Posterior vena cava (tissue), 2 donors: ENCODE measurements at regions of chr20 and their contacts with region 1.

Region 1: GRCh38 chr20:58980700-58981627 is at the start of gene NELFCD:
- DNase-seq: peak; percentile 95
- total RNA-seq, gene NELFCD: 25.9 to 28.2 TPM

Region 2: DNA sequence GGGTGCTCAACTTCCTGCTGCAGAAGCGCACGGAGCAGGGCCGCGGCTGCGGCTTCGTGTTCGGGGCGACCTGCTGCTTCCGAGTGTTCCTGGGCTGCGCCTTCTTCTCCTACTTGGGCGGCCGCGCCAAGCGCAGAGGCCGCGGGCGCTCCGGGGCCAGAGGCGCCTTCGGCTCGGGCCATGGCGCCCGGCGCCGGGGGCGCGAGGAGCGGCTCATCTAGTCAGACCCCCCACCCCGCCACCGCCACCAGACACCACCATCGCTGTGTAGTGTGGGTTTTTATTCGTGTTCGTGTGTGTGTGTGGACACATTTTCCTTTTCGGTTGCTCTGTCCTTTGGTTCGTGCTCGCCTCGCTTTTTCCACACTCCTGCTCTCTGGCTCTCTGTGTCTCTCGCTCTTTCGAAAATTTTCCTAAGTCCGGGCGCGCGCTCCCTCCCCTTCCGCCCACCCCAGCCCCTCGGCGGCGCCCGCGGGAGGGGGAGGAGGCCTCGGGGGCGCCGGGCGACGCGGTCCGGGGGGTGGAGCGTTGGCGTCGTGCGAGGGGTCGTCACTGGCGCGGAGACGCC is 90.4 kb before region 1 on chr20:
- intact Hi-C with region 1: loop called in 1 of 2 experiments (anchors 10 kb)
- DNase-seq: peak; percentile 92

Region 3: DNA sequence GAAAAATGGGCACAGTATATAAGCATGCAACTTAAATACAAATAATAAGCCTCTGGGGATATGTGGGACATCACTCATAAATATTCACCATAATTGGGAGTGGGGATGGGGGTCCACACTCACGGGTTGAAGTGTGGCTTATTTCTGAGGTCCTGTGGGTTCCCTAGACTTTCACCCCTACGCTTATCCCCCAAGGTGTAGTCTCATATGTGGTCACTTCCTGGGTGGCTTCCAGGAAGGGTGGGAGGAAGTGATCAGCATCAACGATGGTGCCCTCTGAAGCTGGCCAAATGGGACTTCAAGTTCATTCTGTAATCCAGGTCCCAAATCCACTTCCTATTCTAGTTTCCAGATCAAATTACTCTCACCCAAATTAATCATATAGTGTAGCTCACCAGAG is 69.0 kb before region 1 on chr20:
- intact Hi-C with region 1: loop called in 1 of 2 experiments (anchors 10 kb)
- DNase-seq: no peak